ENCODE measurements at regions of chr18 and their contacts with region 1.

Region 1: GRCh38 chr18:22267697-22268096 is 98.3 kb downstream of the GATA6 start:
- DNase-seq: peak; percentile 86
- ATAC-seq: peak; percentile 94

Region 2: DNA sequence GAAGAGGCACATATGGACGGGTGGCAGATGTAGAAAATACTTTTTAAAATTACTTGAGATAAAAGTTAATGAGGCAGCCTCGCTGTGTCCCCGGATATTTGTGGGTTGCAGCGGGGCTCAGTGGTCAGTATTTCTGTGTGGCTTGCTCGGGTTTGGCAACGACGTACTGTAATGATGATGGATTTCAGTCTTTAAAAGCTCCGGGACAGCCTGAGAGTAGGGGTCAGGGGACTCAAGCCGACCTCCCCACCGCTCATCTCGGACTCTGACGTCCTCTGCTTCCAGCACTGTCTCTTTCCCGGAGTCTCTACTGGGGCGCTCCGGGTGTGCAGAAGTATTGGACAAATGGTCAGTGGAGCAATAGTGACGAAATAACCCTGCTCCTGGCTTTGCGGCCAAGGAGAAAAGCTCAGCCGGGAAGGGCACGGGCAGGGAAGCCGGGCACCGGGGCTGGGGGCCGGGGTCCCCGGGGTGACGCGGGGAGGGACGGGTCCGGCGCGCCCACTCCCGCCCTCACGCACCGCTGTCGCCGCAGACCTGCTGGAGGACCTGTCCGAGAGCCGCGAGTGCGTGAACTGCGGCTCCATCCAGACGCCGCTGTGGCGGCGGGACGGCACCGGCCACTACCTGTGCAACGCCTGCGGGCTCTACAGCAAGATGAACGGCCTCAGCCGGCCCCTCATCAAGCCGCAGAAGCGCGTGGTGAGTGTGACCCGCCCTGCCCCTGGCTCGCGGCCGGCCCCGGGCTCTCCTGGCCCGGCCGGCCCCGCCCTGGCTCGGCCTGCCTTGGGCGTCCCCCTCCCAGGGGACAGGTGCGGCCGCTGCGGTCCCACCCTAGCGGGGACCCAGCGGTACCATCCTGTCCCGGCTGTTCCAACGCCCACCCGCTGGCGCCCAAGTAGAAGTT is 91.0 kb before region 1 on chr18:
- intact Hi-C with region 1: loop called (anchors 1 kb)
- DNase-seq: no peak
- ATAC-seq: peak; percentile 58

Region 3: GRCh38 chr18:22186484-22186971 is 81.2 kb before region 1 on chr18:
- intact Hi-C with region 1: loop called (anchors 2 kb)
- DNase-seq: no peak
- ATAC-seq: no peak

Region 4: GRCh38 chr18:22207021-22207758 is 60.5 kb before region 1 on chr18:
- intact Hi-C with region 1: loop called (anchors 2 kb)
- DNase-seq: no peak
- ATAC-seq: peak; percentile 76

Region 5: DNA sequence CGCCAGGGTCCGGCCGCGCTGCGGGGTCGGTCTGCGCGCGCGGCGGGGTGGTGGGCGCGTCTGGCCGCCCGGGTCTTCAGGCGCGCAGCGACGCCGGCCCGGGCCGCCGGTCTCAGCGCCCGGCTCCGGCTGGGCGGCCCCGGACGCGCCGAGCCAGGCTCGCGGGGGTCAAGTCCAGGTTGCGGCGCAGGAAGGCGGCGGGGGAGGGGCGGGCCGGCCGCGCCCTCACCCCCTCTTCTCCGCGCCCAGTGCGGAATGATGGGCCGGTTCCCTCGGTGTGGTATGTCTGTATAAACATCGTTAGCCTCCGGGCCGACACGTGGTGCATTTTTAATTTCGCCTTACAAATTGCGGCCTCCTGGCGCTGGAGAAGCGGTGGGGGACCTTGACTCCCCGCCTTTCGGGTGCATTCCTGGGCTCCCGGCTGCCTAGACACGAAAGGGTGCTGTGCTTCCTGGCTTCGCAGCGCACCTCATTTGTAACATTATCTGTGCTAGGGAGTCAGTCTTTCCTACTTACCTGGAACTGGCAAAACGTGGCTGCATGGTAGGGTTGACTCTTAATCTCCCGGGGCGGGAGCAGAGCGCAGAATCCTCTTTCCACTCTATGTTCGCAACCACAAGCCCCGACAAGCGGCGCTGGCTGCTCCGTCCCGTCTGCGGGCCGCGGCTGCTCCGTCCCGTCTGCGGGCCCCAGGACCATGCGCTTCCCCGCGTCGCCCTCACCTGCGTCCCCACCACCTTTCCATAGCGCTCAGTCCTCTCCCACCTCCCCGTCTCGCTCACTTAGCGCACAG is 81.0 kb after region 1 on chr18:
- intact Hi-C with region 1: loop called (anchors 1 kb)
- DNase-seq: peak; percentile 89
- ATAC-seq: peak; percentile 70

Region 6: DNA sequence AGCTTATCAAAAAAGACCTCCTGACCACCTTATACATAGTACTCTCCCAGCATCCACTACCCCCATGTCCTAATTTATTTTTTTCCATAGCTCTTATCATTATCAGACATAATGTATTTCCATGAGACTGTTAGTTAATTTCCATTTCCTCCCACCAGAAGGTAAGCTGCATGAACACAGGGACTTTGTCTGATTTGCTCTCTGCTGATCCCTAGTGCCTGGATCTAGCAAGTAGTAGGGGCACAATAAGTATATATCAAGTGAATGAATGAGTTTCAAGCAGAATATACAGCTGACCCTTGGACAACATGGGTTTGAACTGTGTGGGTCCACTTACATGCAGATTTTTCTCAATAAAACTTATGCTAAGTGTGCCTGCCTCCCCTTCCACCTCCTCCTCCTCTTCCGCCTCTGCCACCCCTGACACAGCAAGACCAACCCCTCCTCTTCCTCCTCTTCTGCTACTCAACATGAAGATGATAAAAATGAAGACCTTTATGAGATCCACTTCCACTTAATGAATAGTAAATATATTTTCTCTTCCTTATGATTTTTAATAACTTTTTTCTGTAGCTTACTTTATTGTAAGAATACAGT is 96.3 kb after region 1 on chr18:
- intact Hi-C with region 1: loop called (anchors 5 kb)
- DNase-seq: no peak
- ATAC-seq: peak; percentile 61

Region 7: GRCh38 chr18:22465859-22466457 is 198.3 kb after region 1 on chr18:
- intact Hi-C with region 1: loop called (anchors 2 kb)
- DNase-seq: no peak
- ATAC-seq: peak; percentile 90